ENCODE measurements at regions of chr3 and their contacts with region 1.

Region 1: DNA sequence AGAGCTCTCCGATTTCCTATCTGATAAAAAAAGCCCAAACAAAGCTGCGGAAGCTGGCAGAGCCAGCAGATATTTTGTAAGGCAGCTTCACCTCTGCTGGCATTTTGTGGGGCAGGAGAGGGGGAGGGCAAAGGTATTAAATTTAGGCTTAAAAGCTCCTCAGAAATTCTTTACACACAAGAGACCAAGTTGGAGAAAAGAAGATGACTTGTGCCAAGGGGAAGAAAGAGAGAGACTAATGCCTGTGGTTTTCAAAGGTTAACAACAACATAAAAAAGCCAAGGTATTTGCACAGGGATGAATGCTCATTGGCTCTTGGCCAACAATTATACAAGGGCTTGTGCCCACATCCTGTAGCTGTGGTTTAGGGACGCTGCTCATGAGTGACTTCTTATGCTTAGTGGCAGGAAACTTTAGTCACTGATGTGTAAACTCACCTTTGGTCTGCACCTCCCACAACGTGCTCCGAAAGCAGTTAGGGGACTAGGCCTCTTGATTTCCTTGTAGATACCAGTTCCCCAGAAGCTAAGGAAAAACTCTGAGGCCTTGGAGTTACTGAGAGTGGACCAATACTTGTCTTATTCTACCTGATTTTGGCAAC is 152.9 kb downstream of the TPRG1 start:
- DNase-seq: peak; percentile 99
- ATAC-seq: peak; percentile 96
- H3K4me3 ChIP-seq: no peak overlapping the region
- H3K27ac ChIP-seq: peak overlapping the region; percentile 85
- H3K4me1 ChIP-seq: peaks cover 26% of the 10 kb centered on the region
- H3K27me3 ChIP-seq: no peaks in the 10 kb centered on the region
- CTCF ChIP-seq: no peak

Region 2: GRCh38 chr3:189276481-189277219 is 48.0 kb before region 1 on chr3:
- CTCF ChIA-PET with region 1: interaction called, 11 read pairs
- POLR2A ChIA-PET with region 1: no interaction called
- intact Hi-C with region 1: loop called (anchors 1 kb)
- DNase-seq: peak; percentile 78
- ATAC-seq: peak; percentile 66
- H3K4me3 ChIP-seq: peak overlapping the region; percentile 22; the same call in 1 of the 2 replicates
- H3K27ac ChIP-seq: peak overlapping the region; percentile 78
- H3K4me1 ChIP-seq: peaks cover 50% of the 10 kb centered on the region
- H3K27me3 ChIP-seq: no peaks in the 10 kb centered on the region
- CTCF ChIP-seq: no peak

Region 3: DNA sequence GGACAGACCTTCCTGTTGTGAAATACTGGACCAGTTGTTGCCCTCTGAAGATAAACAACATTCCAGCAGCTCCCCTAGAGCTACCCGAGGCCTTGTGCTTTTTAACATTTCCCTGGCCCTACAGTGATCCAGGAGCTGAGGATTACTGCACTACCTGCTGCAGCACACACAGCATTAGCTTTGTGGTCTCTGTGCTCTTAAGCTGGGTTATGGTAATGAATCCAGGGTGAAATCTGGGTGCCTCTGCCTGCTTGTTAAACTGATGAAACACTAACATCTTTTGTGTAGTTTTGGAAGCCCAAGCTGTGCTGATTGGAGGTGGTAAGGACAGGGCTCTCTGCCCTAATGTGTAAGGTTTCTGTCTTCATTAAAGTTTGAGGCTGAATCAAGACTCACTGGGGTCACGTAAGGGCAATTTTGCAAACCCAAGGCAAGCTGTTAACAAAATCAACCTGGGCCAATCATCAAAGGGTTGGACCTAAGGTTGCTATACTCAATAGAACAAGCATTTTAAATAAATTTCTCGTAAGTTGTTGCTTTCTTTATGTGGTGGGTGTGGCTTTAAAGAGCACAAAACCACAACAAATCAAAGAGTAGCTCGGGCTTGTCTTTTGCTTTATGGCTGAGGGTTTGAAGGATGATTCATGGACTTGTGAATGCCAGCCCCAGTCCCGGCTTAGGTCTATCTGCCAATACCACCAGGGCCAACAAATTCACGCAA is 31.0 kb after region 1 on chr3:
- CTCF ChIA-PET with region 1: no interaction called
- POLR2A ChIA-PET with region 1: interaction called, 3 read pairs
- intact Hi-C with region 1: loop called (anchors 2 kb)
- DNase-seq: peak; percentile 84
- ATAC-seq: peak; percentile 72
- H3K4me3 ChIP-seq: peak overlapping the region; percentile 19; the same call in 1 of the 2 replicates
- H3K27ac ChIP-seq: peak overlapping the region; percentile 92
- H3K4me1 ChIP-seq: peaks cover 38% of the 10 kb centered on the region
- H3K27me3 ChIP-seq: no peaks in the 10 kb centered on the region
- CTCF ChIP-seq: no peak

Region 4: GRCh38 chr3:189563866-189564563 is 239.4 kb after region 1 on chr3:
- CTCF ChIA-PET with region 1: interaction called, 4 read pairs
- POLR2A ChIA-PET with region 1: no interaction called
- intact Hi-C with region 1: loop called (anchors 1 kb)
- DNase-seq: peak; percentile 97
- ATAC-seq: peak; percentile 96
- H3K4me3 ChIP-seq: peak overlapping the region; percentile 28; the same call in 1 of the 2 replicates
- H3K27ac ChIP-seq: peak overlapping the region; percentile 66
- H3K4me1 ChIP-seq: peaks cover 23% of the 10 kb centered on the region
- H3K27me3 ChIP-seq: no peaks in the 10 kb centered on the region
- CTCF ChIP-seq: no peak; the same call in 1 of the 2 replicates

Region 5: GRCh38 chr3:189756220-189757078 is 431.8 kb after region 1 on chr3:
- CTCF ChIA-PET with region 1: no interaction called
- POLR2A ChIA-PET with region 1: no interaction called
- intact Hi-C with region 1: loop called (anchors 1 kb)
- DNase-seq: peak; percentile 96
- ATAC-seq: peak; percentile 94
- H3K4me3 ChIP-seq: peak overlapping the region; percentile 23; the same call in 1 of the 2 replicates
- H3K27ac ChIP-seq: peak overlapping the region; percentile 48
- H3K4me1 ChIP-seq: peaks cover 32% of the 10 kb centered on the region
- H3K27me3 ChIP-seq: no peaks in the 10 kb centered on the region
- CTCF ChIP-seq: no peak